GM12878 (cell line): ENCODE measurements at regions of chr15 and their contacts with region 1.

Region 1: GRCh38 chr15:48579945-48580671 is 65.4 kb downstream of the FBN1 start:
- DNase-seq: no peak
- ATAC-seq: no peak
- H3K4me3 ChIP-seq: no peak overlapping the region
- H3K27ac ChIP-seq: no peak overlapping the region
- H3K4me1 ChIP-seq: no peaks in the 10 kb centered on the region
- H3K27me3 ChIP-seq: no peaks in the 10 kb centered on the region
- CTCF ChIP-seq: no peak
- EP300 ChIP-seq: no peak
- POLR2A ChIP-seq: no peak
- RAD21 ChIP-seq: no peak

Region 2: DNA sequence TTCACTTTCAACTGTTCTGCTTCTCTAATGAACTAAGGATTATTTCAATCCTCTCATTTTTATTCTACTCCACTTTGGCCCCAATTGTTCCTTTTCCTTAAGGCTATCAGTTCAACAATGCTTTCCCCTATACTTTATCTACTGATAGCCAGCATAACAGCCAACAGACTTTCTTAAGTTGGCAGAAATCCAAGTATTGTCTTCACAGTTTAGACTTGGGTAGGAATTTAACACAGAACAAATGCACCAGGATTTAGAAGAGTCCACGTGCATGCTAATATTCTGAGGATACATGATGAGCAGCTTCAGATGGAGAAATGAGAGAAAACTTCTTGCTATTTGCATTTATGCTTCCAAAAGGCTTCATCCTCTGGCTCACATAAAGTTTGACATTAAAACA is 10.6 kb after region 1 on chr15:
- CTCF ChIA-PET with region 1: interaction called, 3 read pairs
- POLR2A ChIA-PET with region 1: interaction called, 3 read pairs
- RAD21 ChIA-PET with region 1: interaction called, 5 read pairs
- SMC1A ChIA-PET with region 1: interaction called, 14 read pairs
- in situ Hi-C with region 1: no loop called
- intact Hi-C with region 1: no loop called
- DNase-seq: no peak
- ATAC-seq: no peak
- H3K4me3 ChIP-seq: no peak overlapping the region
- H3K27ac ChIP-seq: no peak overlapping the region
- H3K4me1 ChIP-seq: no peaks in the 10 kb centered on the region; the same call in none of the 2 replicates
- H3K27me3 ChIP-seq: no peaks in the 10 kb centered on the region
- CTCF ChIP-seq: no peak
- EP300 ChIP-seq: no peak
- POLR2A ChIP-seq: no peak
- RAD21 ChIP-seq: no peak

Region 3: DNA sequence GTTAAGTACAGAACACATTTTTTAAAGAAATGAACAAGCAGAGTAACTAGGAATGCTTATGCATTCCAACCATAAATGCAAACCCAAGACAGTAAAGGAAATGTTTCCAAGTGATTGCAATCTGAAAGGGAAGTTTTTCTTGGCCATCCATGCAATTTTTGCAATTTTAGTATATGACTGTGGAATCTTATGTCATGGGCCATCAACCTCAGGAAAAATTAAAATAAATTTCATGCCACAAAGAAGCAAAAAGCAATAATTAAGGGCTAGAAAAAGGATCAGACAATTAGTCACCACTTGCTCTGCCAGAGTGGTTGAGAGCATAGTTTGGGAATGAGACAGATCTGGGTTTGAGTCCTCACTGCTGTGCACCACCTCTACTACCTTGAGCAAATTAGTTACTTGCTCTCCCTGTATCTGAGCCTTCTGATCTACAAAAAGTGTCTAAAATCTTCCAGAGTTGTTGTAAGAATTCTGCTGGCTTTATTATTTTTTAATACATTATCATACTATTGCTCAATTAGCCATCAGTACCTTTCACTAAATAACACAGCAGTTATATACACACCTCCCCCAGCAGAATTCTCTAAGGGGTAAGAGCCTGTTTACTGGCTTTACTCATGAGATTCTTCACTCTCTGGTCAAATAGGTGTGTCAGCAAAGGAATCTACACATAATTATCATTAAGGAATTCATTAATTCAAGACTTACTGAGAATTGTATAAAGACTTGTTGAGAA is 115.1 kb after region 1 on chr15:
- CTCF ChIA-PET with region 1: no interaction called
- POLR2A ChIA-PET with region 1: no interaction called
- RAD21 ChIA-PET with region 1: no interaction called
- SMC1A ChIA-PET with region 1: no interaction called
- in situ Hi-C with region 1: no loop called
- intact Hi-C with region 1: no loop called
- DNase-seq: no peak
- ATAC-seq: no peak
- H3K4me3 ChIP-seq: no peak overlapping the region
- H3K27ac ChIP-seq: no peak overlapping the region
- H3K4me1 ChIP-seq: no peaks in the 10 kb centered on the region
- H3K27me3 ChIP-seq: no peaks in the 10 kb centered on the region
- CTCF ChIP-seq: no peak
- EP300 ChIP-seq: no peak
- POLR2A ChIP-seq: no peak
- RAD21 ChIP-seq: no peak